ENCODE measurements at regions of chr7 and their contacts with region 1.

Region 1: GRCh38 chr7:43582503-43583423 is at the start of gene STK17A:
- DNase-seq: peak; percentile 94
- CTCF ChIP-seq: peak; percentile 99

Region 2: GRCh38 chr7:43602271-43602670 is 19.5 kb after region 1 on chr7:
- CTCF ChIA-PET with region 1: interaction called, 39 read pairs
- POLR2A ChIA-PET with region 1: interaction called, 5 read pairs
- DNase-seq: no peak
- CTCF ChIP-seq: no peak

Region 3: DNA sequence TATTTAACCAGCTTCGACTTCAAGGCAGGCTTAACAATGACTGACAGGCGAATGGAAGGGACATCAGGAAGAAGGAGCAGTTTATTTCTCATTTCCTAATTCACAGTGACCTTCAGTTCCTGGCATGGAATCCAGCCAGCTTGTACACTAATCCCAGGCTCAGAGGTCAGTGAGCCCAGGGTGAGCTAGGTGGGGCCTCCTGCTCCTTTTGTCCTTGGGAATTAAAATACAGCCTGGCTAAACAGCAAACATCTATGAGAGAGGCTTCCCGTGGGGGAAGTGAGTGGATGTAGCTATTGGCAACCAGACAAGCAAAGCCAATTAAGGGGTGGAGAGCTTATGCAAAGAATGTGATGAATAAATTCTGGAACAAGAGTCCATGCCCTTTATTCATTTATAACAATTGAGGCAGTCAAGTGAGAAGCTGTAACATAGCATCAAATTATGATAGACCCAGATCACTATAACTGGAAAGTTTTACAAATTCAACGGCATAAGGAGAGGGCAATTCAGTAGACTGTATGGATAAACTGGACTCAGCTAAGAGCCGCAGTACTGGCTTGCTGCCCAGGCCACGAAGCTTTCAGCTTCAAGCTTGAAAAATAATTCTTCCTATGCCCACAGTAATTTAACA is 57.2 kb after region 1 on chr7:
- CTCF ChIA-PET with region 1: interaction called, 29 read pairs
- POLR2A ChIA-PET with region 1: no interaction called
- DNase-seq: no peak
- CTCF ChIP-seq: no peak

Region 4: DNA sequence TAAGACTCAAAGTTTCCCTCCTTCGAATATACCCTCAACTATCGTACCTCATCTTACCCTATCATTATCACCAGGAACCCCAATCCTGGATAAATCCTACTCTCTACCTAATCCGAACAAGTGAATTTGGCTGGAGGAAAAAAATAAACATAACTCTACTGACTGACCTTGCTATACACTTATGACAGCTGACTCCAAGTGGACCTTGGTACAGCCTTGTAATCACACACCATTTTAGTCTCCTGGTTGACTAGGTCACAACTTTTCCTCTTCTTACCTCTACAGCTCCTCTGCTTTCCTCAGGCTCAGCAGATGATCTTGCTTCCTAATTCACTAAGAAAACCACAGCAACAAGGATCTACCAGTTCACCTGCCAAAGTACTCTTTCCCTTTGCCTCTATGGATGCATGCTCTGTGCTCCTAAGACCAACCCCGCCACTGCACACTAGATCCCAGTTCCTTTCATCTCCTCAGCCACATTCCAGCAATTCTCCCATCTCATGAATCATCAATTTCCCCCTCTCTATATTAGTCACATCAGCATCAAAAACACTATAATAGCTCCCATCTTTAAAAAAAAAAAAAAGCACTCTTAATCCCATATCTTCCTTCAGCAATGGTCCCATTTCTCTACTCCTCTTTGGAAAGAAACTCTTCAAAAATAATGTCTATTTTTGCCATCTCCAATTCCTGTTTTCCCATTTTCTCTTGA is 111.1 kb after region 1 on chr7:
- CTCF ChIA-PET with region 1: interaction called, 175 read pairs
- POLR2A ChIA-PET with region 1: interaction called, 4 read pairs
- DNase-seq: no peak
- CTCF ChIP-seq: no peak

Region 5: GRCh38 chr7:43729214-43729923 is 146.6 kb after region 1 on chr7 and contains the start of gene COA1:
- CTCF ChIA-PET with region 1: interaction called, 124 read pairs
- POLR2A ChIA-PET with region 1: interaction called, 3 read pairs
- DNase-seq: peak; percentile 83
- CTCF ChIP-seq: no peak

Region 6: GRCh38 chr7:43764039-43764761 is 181.4 kb after region 1 on chr7:
- CTCF ChIA-PET with region 1: interaction called, 35 read pairs
- POLR2A ChIA-PET with region 1: interaction called, 6 read pairs
- DNase-seq: peak; percentile 65
- CTCF ChIP-seq: no peak

Region 7: GRCh38 chr7:43850348-43851116 is 267.8 kb after region 1 on chr7:
- CTCF ChIA-PET with region 1: interaction called, 14 read pairs
- POLR2A ChIA-PET with region 1: no interaction called
- DNase-seq: no peak
- CTCF ChIP-seq: no peak

Measured in GM10248 (cell line).